Left colon (tissue), 2 donors: ENCODE measurements at regions of chr9 and their contacts with region 1.

Region 1: DNA sequence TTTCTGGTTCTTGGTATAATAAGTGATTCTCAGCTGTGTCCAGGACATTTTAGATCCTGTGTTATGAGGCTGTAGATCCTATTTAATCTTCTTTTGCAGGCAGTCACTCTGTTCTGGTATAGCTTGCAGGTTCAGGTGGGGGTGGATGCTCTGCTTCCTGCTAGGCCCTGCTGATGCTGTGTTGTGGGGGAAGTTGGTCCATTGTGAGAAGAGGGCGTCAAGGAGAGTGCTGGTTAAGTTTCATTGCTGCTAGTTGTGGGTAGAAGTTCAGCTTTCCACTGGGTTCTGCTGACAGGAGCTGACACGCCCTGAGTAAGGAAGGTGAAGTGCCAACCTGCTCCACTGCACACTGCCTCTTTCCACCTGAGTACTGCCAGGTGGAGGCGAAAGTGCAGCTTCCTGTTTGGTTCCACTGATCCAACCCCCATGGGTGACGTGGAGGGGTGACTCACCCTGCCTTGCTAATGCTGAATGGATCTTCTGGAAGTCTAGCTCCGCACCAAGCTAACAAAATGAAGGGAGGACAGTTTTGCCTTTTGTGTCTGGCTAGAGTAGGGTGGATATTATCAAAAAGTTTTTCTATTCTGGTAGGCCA is 16.3 kb downstream of the NMRK1 start:
- DNase-seq: peak; percentile 89 to 93
- ATAC-seq: peak; percentile 100

Region 2: DNA sequence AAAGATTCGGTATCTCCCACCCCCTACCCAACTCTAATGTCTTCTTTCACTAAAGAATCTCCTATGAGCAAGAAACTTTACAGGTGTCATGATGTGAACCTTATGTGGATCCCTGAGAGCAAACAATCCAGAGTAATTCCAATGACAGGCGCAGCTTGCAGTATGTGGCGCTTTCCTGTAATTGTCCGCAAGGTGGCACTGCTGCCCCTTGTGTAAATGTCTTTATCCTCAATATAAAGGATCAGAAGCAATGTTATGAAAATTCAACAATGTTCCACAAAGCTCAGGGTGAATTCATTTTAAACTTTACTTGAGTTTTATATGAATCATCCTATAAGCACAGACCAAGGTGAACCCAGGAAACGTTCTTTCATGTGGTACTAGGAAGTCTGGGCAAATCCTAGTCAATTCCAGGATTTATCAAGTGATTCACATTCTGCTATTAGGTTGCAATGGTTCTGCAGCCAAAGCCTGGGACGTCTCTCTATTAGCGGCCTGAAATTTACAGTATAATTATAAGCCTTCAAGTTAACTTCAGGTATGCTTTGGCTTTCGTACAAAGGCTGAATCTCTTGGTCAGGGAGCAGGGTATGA is 297.6 kb before region 1 on chr9:
- intact Hi-C with region 1: loop called (anchors 2 to 10 kb)
- DNase-seq: peak; percentile 61 to 89
- ATAC-seq: peak; percentile 79

Region 3: GRCh38 chr9:74952281-74953151 is 119.1 kb before region 1 on chr9 and contains the start of gene C9orf40:
- intact Hi-C with region 1: loop called in 1 of 2 experiments (anchors 10 kb)
- DNase-seq: peak; percentile 89 to 95
- ATAC-seq: peak; percentile 94
- total RNA-seq, gene C9orf40: 9.6 to 10.7 TPM

Region 4: DNA sequence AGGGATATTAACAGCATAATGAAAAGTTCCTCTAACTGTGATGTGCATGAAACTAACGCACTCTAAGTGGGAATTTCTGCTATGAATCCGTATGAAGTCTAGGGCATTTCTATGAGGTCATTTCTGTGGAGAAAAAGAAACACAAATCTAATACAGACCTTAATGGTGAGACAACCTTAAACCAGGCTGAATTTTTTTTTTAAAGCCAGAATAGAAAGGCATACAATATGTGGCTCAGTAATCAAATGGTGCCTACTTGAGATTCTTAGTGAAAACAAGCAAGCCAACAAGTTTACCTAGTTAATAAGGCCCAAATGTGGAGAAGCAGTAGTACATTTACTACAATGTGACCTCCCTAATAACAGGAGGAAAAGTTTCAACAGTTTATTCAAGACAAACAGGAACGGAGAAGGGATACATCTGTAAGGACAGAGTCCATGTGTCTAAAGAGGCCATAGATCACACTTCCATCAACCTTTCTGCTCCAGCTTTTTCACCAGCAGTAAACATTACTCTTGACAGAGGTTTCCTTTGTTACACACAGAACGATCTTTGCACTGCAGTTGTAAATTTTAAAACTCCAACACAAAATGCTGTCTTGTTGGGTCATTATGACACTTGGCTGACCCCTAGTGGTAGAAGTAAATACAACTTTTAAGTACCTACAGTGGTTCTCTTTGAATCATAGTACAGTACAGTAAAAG is 69.8 kb before region 1 on chr9:
- intact Hi-C with region 1: loop called in 1 of 2 experiments (anchors 5 kb)
- DNase-seq: no peak
- ATAC-seq: peak; percentile 99